H1 (cell line): ENCODE measurements at regions of chr11 and their contacts with region 1.

Region 1: GRCh38 chr11:765025-765801 is 12.1 kb downstream of the GATD1 start:
- DNase-seq: peak in 1 of 2 experiments; percentile 87
- H3K4me3 ChIP-seq: no peak overlapping the region
- H3K27ac ChIP-seq: no peak overlapping the region
- H3K4me1 ChIP-seq: peaks cover 0 to 12% (median 7%) of the 10 kb centered on the region in 4 experiments; a peak in 6 of 7 replicates
- H3K27me3 ChIP-seq: no peaks in the 10 kb centered on the region
- CTCF ChIP-seq: peak; percentile 66 to 94 (median 82)
- EP300 ChIP-seq: no peak
- POLR2A ChIP-seq: peak in 1 of 2 experiments; percentile 60; a peak in 1 of 3 replicates
- RAD21 ChIP-seq: peak; percentile 86 to 87

Region 2: DNA sequence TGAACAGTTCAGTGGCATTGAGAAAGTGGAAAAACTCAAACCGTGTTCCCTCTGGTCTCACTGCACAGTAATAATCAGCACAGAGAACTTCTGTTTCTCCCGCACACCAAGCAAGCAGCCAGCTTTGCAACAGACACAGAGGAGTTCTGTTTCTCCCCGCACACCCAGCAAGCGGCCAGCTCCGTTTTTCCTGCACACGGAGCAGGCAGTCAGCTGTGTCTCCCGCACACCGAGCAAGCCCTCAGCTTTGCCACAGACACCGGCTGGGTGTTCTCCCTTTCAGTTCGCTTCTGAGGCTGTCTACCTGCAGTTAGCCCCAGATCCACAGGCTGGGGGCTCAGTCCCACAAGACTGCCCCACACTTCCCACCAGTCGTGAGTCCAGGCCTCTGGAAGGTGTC is 27.8 kb before region 1 on chr11:
- CTCF ChIA-PET with region 1: interaction called, 395 read pairs
- POLR2A ChIA-PET with region 1: interaction called, 636 read pairs
- DNase-seq: no peak
- H3K4me3 ChIP-seq: no peak overlapping the region
- H3K27ac ChIP-seq: no peak overlapping the region
- H3K4me1 ChIP-seq: no peaks in the 10 kb centered on the region
- H3K27me3 ChIP-seq: no peaks in the 10 kb centered on the region; a peak in 1 of 7 replicates
- CTCF ChIP-seq: no peak
- EP300 ChIP-seq: no peak
- POLR2A ChIP-seq: no peak
- RAD21 ChIP-seq: no peak